Activated B cell treated with CpG ODN at 0.5 μM for 24 hours (primary cell): ENCODE measurements at regions of chrX and their contacts with region 1.

Region 1: GRCh38 chrX:104113222-104113965 is 1.1 kb downstream of the ZCCHC18 start:
- DNase-seq: peak; percentile 18
- ATAC-seq: peak; percentile 67
- H3K4me3 Mint-ChIP-seq: peak overlapping the region; percentile 90
- H3K27ac Mint-ChIP-seq: peak overlapping the region; percentile 77
- H3K4me1 Mint-ChIP-seq: peaks cover 45% of the 10 kb centered on the region
- H3K27me3 Mint-ChIP-seq: no peaks in the 10 kb centered on the region
- CTCF ChIP-seq: no peak

Region 2: GRCh38 chrX:103918581-103919269 is 194.7 kb before region 1 on chrX:
- CTCF ChIA-PET with region 1: no interaction called
- POLR2A ChIA-PET with region 1: interaction called, 3 read pairs
- intact Hi-C with region 1: loop called (anchors 5 kb)
- DNase-seq: peak; percentile 45
- ATAC-seq: peak; percentile 70
- H3K4me3 Mint-ChIP-seq: peak overlapping the region; percentile 87
- H3K27ac Mint-ChIP-seq: peak overlapping the region; percentile 84
- H3K4me1 Mint-ChIP-seq: peaks cover 11% of the 10 kb centered on the region
- H3K27me3 Mint-ChIP-seq: no peaks in the 10 kb centered on the region
- CTCF ChIP-seq: no peak

Region 3: DNA sequence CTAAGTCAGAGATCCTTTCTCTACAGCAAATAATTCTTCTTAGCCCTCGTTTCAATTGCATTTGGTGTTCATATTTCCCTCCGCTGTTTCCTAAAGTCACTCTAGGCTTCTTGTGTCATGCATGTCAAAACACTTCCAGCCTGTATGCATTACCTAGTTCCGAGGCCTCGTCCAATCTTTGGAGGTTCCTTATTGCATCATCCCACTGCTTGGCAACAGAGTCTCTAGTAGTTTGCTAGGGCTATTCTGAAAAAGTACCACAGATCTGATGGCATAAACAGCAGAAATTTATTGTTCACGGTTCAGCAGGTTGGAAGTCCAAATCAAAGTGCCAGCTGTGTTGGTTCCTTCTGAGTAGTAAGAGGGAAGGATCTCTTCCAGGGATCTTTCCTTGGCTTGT is 67.8 kb before region 1 on chrX:
- CTCF ChIA-PET with region 1: no interaction called
- POLR2A ChIA-PET with region 1: no interaction called
- intact Hi-C with region 1: no loop called
- DNase-seq: no peak
- ATAC-seq: no peak
- H3K4me3 Mint-ChIP-seq: no peak overlapping the region
- H3K27ac Mint-ChIP-seq: no peak overlapping the region
- H3K4me1 Mint-ChIP-seq: no peaks in the 10 kb centered on the region
- H3K27me3 Mint-ChIP-seq: peaks cover 4% of the 10 kb centered on the region
- CTCF ChIP-seq: no peak

Region 4: GRCh38 chrX:104098151-104098808 is 15.1 kb before region 1 on chrX:
- CTCF ChIA-PET with region 1: interaction called, 22 read pairs
- POLR2A ChIA-PET with region 1: interaction called, 3 read pairs
- intact Hi-C with region 1: loop called (anchors 1 kb)
- DNase-seq: no peak
- ATAC-seq: peak; percentile 68
- H3K4me3 Mint-ChIP-seq: no peak overlapping the region
- H3K27ac Mint-ChIP-seq: no peak overlapping the region
- H3K4me1 Mint-ChIP-seq: peaks cover 4% of the 10 kb centered on the region
- H3K27me3 Mint-ChIP-seq: peaks cover 2% of the 10 kb centered on the region
- CTCF ChIP-seq: no peak

Region 5: GRCh38 chrX:104156630-104157529 is 43.5 kb after region 1 on chrX and contains the start of gene SLC25A53:
- CTCF ChIA-PET with region 1: interaction called, 4 read pairs
- POLR2A ChIA-PET with region 1: interaction called, 21 read pairs
- intact Hi-C with region 1: loop called (anchors 5 kb)
- DNase-seq: peak; percentile 67
- ATAC-seq: peak; percentile 89
- H3K4me3 Mint-ChIP-seq: peak within 1 kb of the TSS; percentile 100
- H3K27ac Mint-ChIP-seq: peak within 1 kb of the TSS; percentile 100
- H3K4me1 Mint-ChIP-seq: peaks cover 12% of the 10 kb centered on the region
- H3K27me3 Mint-ChIP-seq: no peaks in the 10 kb centered on the region
- CTCF ChIP-seq: no peak
- total RNA-seq, gene SLC25A53: 9.6 and 11.6 TPM in 2 replicates